PC-9 (cell line): ENCODE measurements at regions of chr6 and their contacts with region 1.

Region 1: GRCh38 chr6:28266962-28267694 is at the start of gene ZSCAN26:
- DNase-seq: peak; percentile 79 to 87
- H3K4me3 ChIP-seq: peak within 1 kb of the TSS; percentile 65
- H3K27ac ChIP-seq: peak within 1 kb of the TSS; percentile 39
- H3K4me1 ChIP-seq: peaks cover 28% of the 10 kb centered on the region
- H3K27me3 ChIP-seq: no peaks in the 10 kb centered on the region
- CTCF ChIP-seq: no peak
- total RNA-seq, gene ZSCAN26: 12.1 and 14.8 TPM in 2 replicates

Region 2: GRCh38 chr6:27871924-27872638 is 395.0 kb before region 1 on chr6:
- CTCF ChIA-PET with region 1: no interaction called
- POLR2A ChIA-PET with region 1: interaction called, 16 read pairs
- intact Hi-C with region 1: no loop called
- DNase-seq: peak; percentile 83 to 85
- H3K4me3 ChIP-seq: peak overlapping the region; percentile 67
- H3K27ac ChIP-seq: peak overlapping the region; percentile 70
- H3K4me1 ChIP-seq: peaks cover 7% of the 10 kb centered on the region; the same call in 1 of the 2 replicates
- H3K27me3 ChIP-seq: no peaks in the 10 kb centered on the region
- CTCF ChIP-seq: peak; percentile 36; the same call in 1 of the 2 replicates

Region 3: DNA sequence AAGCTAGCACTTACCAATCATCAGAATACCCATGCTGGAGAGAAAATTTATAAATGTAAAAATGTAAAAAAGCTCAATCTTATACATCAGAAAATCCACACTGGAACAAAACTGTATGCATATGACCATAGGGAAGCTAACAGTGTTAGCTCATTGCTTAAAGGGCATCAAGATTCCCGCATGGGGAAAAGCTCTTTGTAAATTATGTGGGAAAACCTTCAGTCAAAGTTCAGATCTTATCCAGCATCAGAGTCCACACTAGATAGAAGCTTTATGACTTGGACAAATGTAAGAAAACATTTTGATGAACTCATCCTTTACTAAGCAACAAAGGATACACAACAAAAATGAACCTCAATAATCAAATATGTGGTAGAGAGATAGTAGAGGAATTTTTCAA is 90.8 kb before region 1 on chr6:
- CTCF ChIA-PET with region 1: no interaction called
- POLR2A ChIA-PET with region 1: interaction called, 13 read pairs
- intact Hi-C with region 1: no loop called
- DNase-seq: no peak
- H3K4me3 ChIP-seq: no peak overlapping the region
- H3K27ac ChIP-seq: no peak overlapping the region
- H3K4me1 ChIP-seq: no peaks in the 10 kb centered on the region
- H3K27me3 ChIP-seq: no peaks in the 10 kb centered on the region
- CTCF ChIP-seq: no peak

Region 4: GRCh38 chr6:28252009-28252975 is 14.8 kb before region 1 on chr6 and contains the start of gene ZKSCAN4:
- CTCF ChIA-PET with region 1: no interaction called
- POLR2A ChIA-PET with region 1: interaction called, 4 read pairs
- intact Hi-C with region 1: loop called (anchors 1 kb)
- DNase-seq: peak; percentile 73 to 76
- H3K4me3 ChIP-seq: peak within 1 kb of the TSS; percentile 99
- H3K27ac ChIP-seq: no peak within 1 kb of the TSS
- H3K4me1 ChIP-seq: peaks cover 19% of the 10 kb centered on the region
- H3K27me3 ChIP-seq: no peaks in the 10 kb centered on the region
- CTCF ChIP-seq: no peak
- total RNA-seq, gene ZKSCAN4: 6.0 and 6.7 TPM in 2 replicates

Region 5: GRCh38 chr6:28322661-28323060 is 55.5 kb after region 1 on chr6:
- CTCF ChIA-PET with region 1: no interaction called
- POLR2A ChIA-PET with region 1: interaction called, 10 read pairs
- intact Hi-C with region 1: no loop called
- DNase-seq: no peak
- H3K4me3 ChIP-seq: no peak overlapping the region
- H3K27ac ChIP-seq: no peak overlapping the region
- H3K4me1 ChIP-seq: no peaks in the 10 kb centered on the region
- H3K27me3 ChIP-seq: no peaks in the 10 kb centered on the region
- CTCF ChIP-seq: no peak

Region 6: GRCh38 chr6:28355743-28356665 is 88.9 kb after region 1 on chr6:
- CTCF ChIA-PET with region 1: interaction called, 3 read pairs
- POLR2A ChIA-PET with region 1: no interaction called
- intact Hi-C with region 1: loop called (anchors 5 kb)
- DNase-seq: peak; percentile 75 to 80
- H3K4me3 ChIP-seq: peak overlapping the region; percentile 70
- H3K27ac ChIP-seq: peak overlapping the region; percentile 55
- H3K4me1 ChIP-seq: peaks cover 28% of the 10 kb centered on the region
- H3K27me3 ChIP-seq: no peaks in the 10 kb centered on the region
- CTCF ChIP-seq: peak; percentile 86